Right cardiac atrium (tissue), 5 donors: ENCODE measurements at regions of chr6 and their contacts with region 1.

Region 1: GRCh38 chr6:41463062-41463930 is 82.9 kb upstream of the FOXP4 start:
- DNase-seq: peak; percentile 74 to 91 (median 87)
- ATAC-seq: peak; percentile 90 to 92
- H3K4me3 ChIP-seq: no peak overlapping the region
- H3K27ac ChIP-seq: no peak overlapping the region
- H3K4me1 ChIP-seq: no peaks in the 10 kb centered on the region
- H3K27me3 ChIP-seq: no peaks in the 10 kb centered on the region

Region 2: GRCh38 chr6:41591859-41592502 is 128.7 kb after region 1 on chr6:
- intact Hi-C with region 1: loop called in 3 of 4 experiments (anchors 2 to 5 kb)
- DNase-seq: peak; percentile 56 to 87 (median 82)
- ATAC-seq: peak; percentile 61 to 73
- H3K4me3 ChIP-seq: no peak overlapping the region
- H3K27ac ChIP-seq: no peak overlapping the region
- H3K4me1 ChIP-seq: no peaks in the 10 kb centered on the region
- H3K27me3 ChIP-seq: no peaks in the 10 kb centered on the region

Region 3: DNA sequence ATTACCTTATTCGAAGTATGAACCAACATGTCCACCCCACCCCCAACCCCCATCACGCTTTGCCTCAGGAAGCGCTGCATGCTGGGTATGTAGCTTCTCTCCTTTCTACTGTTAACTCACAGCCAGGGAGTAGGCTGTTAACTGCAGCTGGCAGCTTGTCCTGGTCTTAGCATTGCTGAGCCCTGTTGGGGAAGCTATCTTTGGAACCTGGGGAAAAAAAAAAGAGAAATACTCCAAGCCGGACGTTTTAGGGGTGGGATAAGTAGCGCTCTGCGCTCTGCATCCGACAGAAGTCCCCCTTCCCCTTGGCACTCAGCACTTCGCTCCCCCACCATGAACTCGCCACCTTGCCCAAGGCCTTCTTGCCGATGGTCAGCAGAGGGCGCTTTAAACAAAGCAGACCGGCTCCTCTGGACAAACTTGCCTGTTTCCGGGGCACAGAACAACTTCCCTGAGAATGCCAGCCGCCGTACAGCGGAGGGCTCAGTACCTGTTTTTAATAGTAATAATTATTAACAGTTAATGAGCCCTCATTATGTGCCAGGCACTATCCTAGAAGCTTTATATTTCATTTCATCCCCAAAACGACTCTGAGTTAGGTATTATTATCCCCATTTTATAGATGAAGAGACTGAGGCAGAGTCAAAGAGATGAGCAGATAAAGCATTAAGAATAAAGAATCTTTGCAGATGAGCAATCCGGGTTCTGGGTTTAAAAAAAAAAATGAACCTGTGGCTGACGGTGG is 139.7 kb after region 1 on chr6:
- intact Hi-C with region 1: loop called in 1 of 4 experiments (anchors 5 kb)
- DNase-seq: peak; percentile 83 to 91 (median 91)
- ATAC-seq: peak; percentile 77 to 79
- H3K4me3 ChIP-seq: no peak overlapping the region
- H3K27ac ChIP-seq: no peak overlapping the region
- H3K4me1 ChIP-seq: no peaks in the 10 kb centered on the region
- H3K27me3 ChIP-seq: no peaks in the 10 kb centered on the region